SK-N-SH (cell line): ENCODE measurements at regions of chr10 and their contacts with region 1.

Region 1: DNA sequence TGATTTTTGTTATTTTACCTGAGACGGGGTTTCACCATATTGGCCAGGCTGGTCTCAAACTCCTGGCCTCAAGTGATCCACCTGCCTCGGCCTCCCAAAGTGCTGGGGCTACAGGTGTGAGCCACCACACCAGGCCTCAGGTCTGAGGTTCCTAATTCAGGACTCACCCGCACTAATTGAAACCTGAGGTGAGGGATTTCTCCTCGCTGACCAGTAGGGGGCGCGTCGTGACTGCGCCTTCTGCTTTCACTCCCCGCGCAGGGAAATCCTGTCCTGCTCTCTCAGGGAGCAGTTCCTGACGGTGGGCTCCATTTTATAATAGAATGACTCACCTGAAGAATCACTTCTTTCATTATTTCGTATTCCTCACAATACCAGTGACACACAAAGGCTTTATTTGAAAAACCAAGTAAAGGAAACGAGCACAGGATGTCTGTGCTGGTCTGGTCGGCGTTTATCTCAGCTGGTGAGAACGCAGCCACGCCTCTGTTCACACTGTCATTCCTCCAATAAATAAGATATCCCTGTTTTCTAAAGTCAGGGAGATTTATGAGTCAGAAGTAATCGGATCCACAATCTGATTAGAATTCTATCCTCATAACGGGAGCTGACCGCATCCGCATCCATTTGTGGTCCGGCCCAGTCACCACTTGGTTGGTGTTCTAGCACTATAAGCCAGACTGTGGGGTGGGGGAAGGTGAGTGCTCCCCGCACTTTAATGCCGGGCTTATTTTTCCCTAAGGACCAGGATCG is 35.4 kb downstream of the BAG3 start:
- DNase-seq: peak; percentile 81
- H3K4me3 ChIP-seq: peak overlapping the region; percentile 27 to 36; a peak in 3 of 4 replicates
- H3K27ac ChIP-seq: peak overlapping the region in 1 of 2 experiments; percentile 87; a peak in 2 of 4 replicates
- H3K4me1 ChIP-seq: peaks cover 0 to 11% of the 10 kb centered on the region in 2 experiments; a peak in 1 of 4 replicates
- H3K27me3 ChIP-seq: no peaks in the 10 kb centered on the region
- CTCF ChIP-seq: peak; percentile 97
- EP300 ChIP-seq: peak; percentile 7 to 63; a peak in 1 of 4 replicates
- RAD21 ChIP-seq: peak; percentile 88

Region 2: GRCh38 chr10:119290291-119291048 is 396.1 kb before region 1 on chr10:
- CTCF ChIA-PET with region 1: no interaction called
- POLR2A ChIA-PET with region 1: no interaction called
- DNase-seq: no peak
- H3K4me3 ChIP-seq: no peak overlapping the region
- H3K27ac ChIP-seq: no peak overlapping the region
- H3K4me1 ChIP-seq: peaks cover 12 to 35% of the 10 kb centered on the region in 2 experiments; a peak in 2 of 4 replicates
- H3K27me3 ChIP-seq: no peaks in the 10 kb centered on the region
- CTCF ChIP-seq: peak; percentile 25
- EP300 ChIP-seq: no peak
- RAD21 ChIP-seq: peak; percentile 43

Region 3: DNA sequence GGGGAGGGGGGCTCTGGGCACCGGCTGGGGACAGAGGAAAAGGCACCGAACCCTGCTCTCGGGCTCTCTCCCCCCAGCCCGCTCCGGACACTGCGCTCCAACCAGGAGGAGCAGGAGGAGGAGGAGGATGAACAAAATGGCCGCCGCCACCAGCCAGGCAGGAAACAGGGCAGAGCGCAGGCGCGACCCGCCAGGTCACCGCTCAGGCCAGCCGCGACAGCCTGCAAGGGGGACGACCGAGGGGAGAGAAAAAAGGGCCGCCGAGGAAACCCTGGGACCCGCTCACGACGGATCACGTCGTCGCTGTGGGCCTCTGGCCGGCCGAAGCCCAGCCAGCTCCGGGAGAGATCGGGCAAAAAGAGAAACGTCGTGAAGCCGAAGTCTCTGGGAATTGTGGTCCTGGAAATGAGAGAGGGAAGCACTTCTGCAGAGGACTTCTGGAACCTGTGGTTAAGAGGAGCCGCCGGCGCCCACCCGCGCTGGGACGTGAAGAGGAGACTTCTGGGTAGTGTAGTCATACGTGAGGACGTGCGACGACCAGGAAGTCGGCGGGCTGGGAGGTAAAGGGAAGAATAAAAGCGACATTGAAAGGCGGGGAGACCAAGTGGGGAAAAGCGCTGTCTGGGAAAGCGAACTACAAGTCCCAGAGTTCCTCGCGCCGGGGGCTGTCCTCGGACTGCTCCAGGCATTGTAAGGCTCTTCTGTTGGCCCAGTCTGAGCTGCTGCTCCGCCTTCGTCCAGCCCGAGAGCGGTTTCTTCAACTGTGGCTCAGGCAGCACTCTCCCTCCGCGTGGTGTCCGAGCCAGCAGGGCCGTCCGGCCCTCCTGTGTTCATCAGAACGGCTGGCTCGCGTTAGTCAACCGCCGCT is 89.8 kb before region 1 on chr10 and contains the start of gene TIAL1:
- CTCF ChIA-PET with region 1: no interaction called
- POLR2A ChIA-PET with region 1: no interaction called
- DNase-seq: peak; percentile 89
- H3K4me3 ChIP-seq: peak within 1 kb of the TSS; percentile 96
- H3K27ac ChIP-seq: peak within 1 kb of the TSS; percentile 99
- H3K4me1 ChIP-seq: peaks cover 31% of the 10 kb centered on the region in 2 experiments
- H3K27me3 ChIP-seq: no peaks in the 10 kb centered on the region
- CTCF ChIP-seq: no peak
- EP300 ChIP-seq: no peak
- RAD21 ChIP-seq: no peak
- polyA plus RNA-seq, gene TIAL1: 58.0 and 70.6 TPM in 2 replicates

Region 4: DNA sequence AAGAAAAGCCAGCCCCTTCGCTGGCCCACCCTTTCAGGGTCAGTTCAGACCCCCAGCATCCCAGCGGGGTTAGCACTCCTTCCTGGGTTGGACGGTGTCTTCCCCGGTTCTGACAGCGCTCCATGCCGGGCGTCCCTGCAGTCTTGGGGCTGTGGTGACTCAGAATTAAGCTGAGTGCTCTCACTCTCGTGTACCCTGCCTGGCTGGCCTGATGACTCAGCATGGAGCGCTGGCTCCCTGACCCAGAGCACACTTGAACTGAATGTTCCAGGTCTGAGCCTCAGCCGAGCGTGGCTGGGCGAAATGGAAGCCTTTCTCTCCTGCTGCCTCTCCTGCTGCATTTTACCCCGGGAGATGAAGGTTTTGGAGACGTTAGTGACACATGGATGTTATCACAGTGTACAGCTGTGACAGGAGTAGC is 28.4 kb before region 1 on chr10:
- CTCF ChIA-PET with region 1: interaction called, 11 read pairs
- POLR2A ChIA-PET with region 1: no interaction called
- DNase-seq: no peak
- H3K4me3 ChIP-seq: peak overlapping the region in 1 of 2 experiments; percentile 39; a peak in 2 of 4 replicates
- H3K27ac ChIP-seq: peak overlapping the region; percentile 60 to 95; a peak in 3 of 4 replicates
- H3K4me1 ChIP-seq: peaks cover 18 to 51% of the 10 kb centered on the region in 2 experiments
- H3K27me3 ChIP-seq: no peaks in the 10 kb centered on the region
- CTCF ChIP-seq: no peak
- EP300 ChIP-seq: no peak; a peak in 1 of 4 replicates
- RAD21 ChIP-seq: no peak

Region 5: GRCh38 chr10:119667562-119668328 is 18.9 kb before region 1 on chr10:
- CTCF ChIA-PET with region 1: interaction called, 32 read pairs
- POLR2A ChIA-PET with region 1: no interaction called
- DNase-seq: peak; percentile 46
- H3K4me3 ChIP-seq: peak overlapping the region in 1 of 2 experiments; percentile 42; a peak in 1 of 4 replicates
- H3K27ac ChIP-seq: peak overlapping the region; percentile 64 to 92
- H3K4me1 ChIP-seq: peaks cover 17 to 67% of the 10 kb centered on the region in 2 experiments; a peak in 3 of 4 replicates
- H3K27me3 ChIP-seq: no peaks in the 10 kb centered on the region
- CTCF ChIP-seq: peak; percentile 36
- EP300 ChIP-seq: peak in 1 of 2 experiments; percentile 68; a peak in 1 of 4 replicates
- RAD21 ChIP-seq: no peak

Region 6: DNA sequence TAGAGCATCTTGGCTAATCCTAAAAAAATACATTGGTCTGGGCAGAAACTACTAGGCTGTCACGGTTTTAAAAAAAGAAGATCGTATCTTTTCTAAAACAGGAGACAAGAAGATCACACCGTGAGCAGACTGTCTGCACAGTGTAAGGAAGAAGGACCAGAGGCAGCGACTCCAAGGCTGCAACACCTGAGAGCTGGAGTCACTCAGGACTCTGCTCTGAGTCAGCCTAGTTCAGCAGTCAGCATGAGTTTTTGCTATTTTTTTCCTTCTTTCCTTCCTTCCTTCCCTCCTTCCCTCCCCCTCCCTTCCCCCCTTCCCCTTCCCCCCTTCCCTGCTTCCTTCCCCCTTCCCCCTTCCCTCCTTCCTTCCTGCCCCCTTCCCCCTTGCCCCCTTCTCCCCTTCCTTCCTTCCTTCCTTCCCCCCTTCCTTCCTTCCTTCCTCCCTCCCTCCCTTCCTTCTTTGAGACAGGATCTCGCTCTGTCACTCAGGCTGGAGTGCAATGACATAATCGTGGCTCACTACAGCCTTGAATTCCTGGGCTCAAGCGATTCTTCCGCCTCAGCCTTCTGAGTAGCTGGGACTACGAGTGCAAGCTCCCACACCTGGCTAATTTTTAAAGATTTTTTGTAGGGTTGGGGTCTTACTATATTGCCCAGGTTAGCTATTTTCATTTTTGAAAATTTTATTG is 11.0 kb before region 1 on chr10:
- CTCF ChIA-PET with region 1: interaction called, 32 read pairs
- POLR2A ChIA-PET with region 1: no interaction called
- DNase-seq: no peak
- H3K4me3 ChIP-seq: no peak overlapping the region
- H3K27ac ChIP-seq: peak overlapping the region in 1 of 2 experiments; percentile 17; a peak in 2 of 4 replicates
- H3K4me1 ChIP-seq: peaks cover 10 to 42% of the 10 kb centered on the region in 2 experiments; a peak in 2 of 4 replicates
- H3K27me3 ChIP-seq: no peaks in the 10 kb centered on the region
- CTCF ChIP-seq: no peak
- EP300 ChIP-seq: no peak
- RAD21 ChIP-seq: no peak

Region 7: GRCh38 chr10:119705434-119705831 is 18.8 kb after region 1 on chr10:
- CTCF ChIA-PET with region 1: interaction called, 38 read pairs
- POLR2A ChIA-PET with region 1: no interaction called
- DNase-seq: no peak
- H3K4me3 ChIP-seq: no peak overlapping the region
- H3K27ac ChIP-seq: no peak overlapping the region
- H3K4me1 ChIP-seq: no peaks in the 10 kb centered on the region
- H3K27me3 ChIP-seq: no peaks in the 10 kb centered on the region
- CTCF ChIP-seq: no peak
- EP300 ChIP-seq: no peak
- RAD21 ChIP-seq: no peak

Region 8: GRCh38 chr10:119715628-119716505 is 29.3 kb after region 1 on chr10:
- CTCF ChIA-PET with region 1: interaction called, 21 read pairs
- POLR2A ChIA-PET with region 1: no interaction called
- DNase-seq: peak; percentile 26
- H3K4me3 ChIP-seq: no peak overlapping the region
- H3K27ac ChIP-seq: no peak overlapping the region
- H3K4me1 ChIP-seq: no peaks in the 10 kb centered on the region; a peak in 1 of 4 replicates
- H3K27me3 ChIP-seq: no peaks in the 10 kb centered on the region
- CTCF ChIP-seq: no peak
- EP300 ChIP-seq: no peak
- RAD21 ChIP-seq: no peak